MCF 10A (cell line): ENCODE measurements at regions of chr7 and their contacts with region 1.

Region 1: GRCh38 chr7:95608359-95609173 is 12.2 kb upstream of the PDK4 start:
- DNase-seq: peak; percentile 95
- H3K4me3 Mint-ChIP-seq: peak overlapping the region; percentile 53
- H3K27ac Mint-ChIP-seq: peak overlapping the region; percentile 90
- H3K4me1 Mint-ChIP-seq: peaks cover 13% of the 10 kb centered on the region
- H3K27me3 Mint-ChIP-seq: no peaks in the 10 kb centered on the region
- CTCF ChIP-seq: no peak

Region 2: DNA sequence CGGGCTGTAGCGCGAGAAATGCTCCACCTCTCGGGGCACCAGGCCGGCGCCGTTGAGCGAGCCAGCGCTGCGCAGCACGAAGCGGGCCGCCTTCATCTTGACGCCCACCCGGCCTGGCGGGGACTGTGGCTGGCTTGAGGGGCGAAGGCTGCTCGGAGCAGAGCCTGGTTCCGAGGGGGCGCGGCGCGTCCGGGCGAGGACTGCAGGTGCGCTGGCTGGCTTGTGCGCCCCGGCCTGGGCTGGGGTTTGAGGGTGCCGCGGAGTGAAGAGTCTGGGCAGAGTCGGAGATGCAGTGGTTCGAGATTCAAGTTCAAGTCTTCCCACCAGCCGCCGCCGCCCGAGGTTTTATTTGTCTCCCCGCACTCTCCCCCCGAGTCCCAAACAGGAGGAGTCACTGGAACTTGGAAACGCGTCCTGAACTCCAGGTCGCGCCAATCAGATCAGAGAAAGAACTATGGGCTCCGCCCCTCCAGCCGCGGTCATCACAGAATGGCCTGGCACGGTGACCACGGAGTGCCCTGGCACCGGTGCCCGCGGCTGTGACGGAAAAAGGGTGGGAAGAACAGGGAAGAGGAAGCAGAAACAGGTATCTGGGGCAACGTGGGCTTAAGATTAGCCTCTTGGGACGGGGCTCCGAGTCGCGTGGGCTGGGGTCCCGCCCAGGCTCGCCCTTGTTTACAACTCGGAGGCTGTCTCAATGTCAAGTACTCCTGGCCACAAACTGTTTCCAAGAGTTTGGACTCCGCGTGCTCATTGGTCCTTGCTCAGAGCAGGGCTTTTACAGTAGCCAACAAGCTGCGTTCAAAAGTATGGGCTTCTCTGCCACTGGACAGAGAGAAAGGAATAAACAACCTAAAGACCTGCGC is 12.1 kb before region 1 on chr7 and contains the start of gene PDK4:
- CTCF ChIA-PET with region 1: interaction called, 5 read pairs
- POLR2A ChIA-PET with region 1: interaction called, 61 read pairs
- intact Hi-C with region 1: no loop called
- DNase-seq: peak; percentile 89
- H3K4me3 Mint-ChIP-seq: peak within 1 kb of the TSS; percentile 72
- H3K27ac Mint-ChIP-seq: peak within 1 kb of the TSS; percentile 84
- H3K4me1 Mint-ChIP-seq: peaks cover 13% of the 10 kb centered on the region
- H3K27me3 Mint-ChIP-seq: no peaks in the 10 kb centered on the region
- CTCF ChIP-seq: no peak
- total RNA-seq, gene PDK4: 1.2 and 1.3 TPM in 2 replicates

Region 3: GRCh38 chr7:96151889-96152288 is 543.3 kb after region 1 on chr7:
- CTCF ChIA-PET with region 1: no interaction called
- POLR2A ChIA-PET with region 1: no interaction called
- intact Hi-C with region 1: no loop called
- DNase-seq: no peak
- H3K4me3 Mint-ChIP-seq: no peak overlapping the region
- H3K27ac Mint-ChIP-seq: no peak overlapping the region
- H3K4me1 Mint-ChIP-seq: no peaks in the 10 kb centered on the region
- H3K27me3 Mint-ChIP-seq: no peaks in the 10 kb centered on the region
- CTCF ChIP-seq: no peak